Motor neuron (in vitro differentiated cells): ENCODE measurements at regions of chr20 and their contacts with region 1.

Region 1: GRCh38 chr20:24992487-24993205 is at the start of gene APMAP:
- ATAC-seq: peak; percentile 91 to 97 (median 94)
- H3K4me3 ChIP-seq: peak within 1 kb of the TSS; percentile 78 to 100 (median 97)
- H3K27ac ChIP-seq: peak within 1 kb of the TSS; percentile 77 to 84
- H3K4me1 ChIP-seq: peaks cover 20 to 33% of the 10 kb centered on the region in 2 donors
- total RNA-seq, gene APMAP: 47.5 to 163 (median 73.7) TPM

Region 2: GRCh38 chr20:25065625-25066338 is 73.1 kb after region 1 on chr20:
- in situ Hi-C with region 1: loop called in 3 of 9 experiments (anchors 5 to 10 kb)
- ATAC-seq: peak; percentile 59 to 82 (median 73)
- H3K4me3 ChIP-seq: no peak overlapping the region
- H3K27ac ChIP-seq: no peak overlapping the region
- H3K4me1 ChIP-seq: no peaks in the 10 kb centered on the region

Region 3: GRCh38 chr20:25160467-25160866 is 167.8 kb after region 1 on chr20:
- in situ Hi-C with region 1: loop called in 2 of 9 experiments (anchors 10 to 25 kb)
- ATAC-seq: peak in 2 of 8 experiments; percentile 6 to 27
- H3K4me3 ChIP-seq: no peak overlapping the region
- H3K27ac ChIP-seq: no peak overlapping the region
- H3K4me1 ChIP-seq: no peaks in the 10 kb centered on the region

Region 4: DNA sequence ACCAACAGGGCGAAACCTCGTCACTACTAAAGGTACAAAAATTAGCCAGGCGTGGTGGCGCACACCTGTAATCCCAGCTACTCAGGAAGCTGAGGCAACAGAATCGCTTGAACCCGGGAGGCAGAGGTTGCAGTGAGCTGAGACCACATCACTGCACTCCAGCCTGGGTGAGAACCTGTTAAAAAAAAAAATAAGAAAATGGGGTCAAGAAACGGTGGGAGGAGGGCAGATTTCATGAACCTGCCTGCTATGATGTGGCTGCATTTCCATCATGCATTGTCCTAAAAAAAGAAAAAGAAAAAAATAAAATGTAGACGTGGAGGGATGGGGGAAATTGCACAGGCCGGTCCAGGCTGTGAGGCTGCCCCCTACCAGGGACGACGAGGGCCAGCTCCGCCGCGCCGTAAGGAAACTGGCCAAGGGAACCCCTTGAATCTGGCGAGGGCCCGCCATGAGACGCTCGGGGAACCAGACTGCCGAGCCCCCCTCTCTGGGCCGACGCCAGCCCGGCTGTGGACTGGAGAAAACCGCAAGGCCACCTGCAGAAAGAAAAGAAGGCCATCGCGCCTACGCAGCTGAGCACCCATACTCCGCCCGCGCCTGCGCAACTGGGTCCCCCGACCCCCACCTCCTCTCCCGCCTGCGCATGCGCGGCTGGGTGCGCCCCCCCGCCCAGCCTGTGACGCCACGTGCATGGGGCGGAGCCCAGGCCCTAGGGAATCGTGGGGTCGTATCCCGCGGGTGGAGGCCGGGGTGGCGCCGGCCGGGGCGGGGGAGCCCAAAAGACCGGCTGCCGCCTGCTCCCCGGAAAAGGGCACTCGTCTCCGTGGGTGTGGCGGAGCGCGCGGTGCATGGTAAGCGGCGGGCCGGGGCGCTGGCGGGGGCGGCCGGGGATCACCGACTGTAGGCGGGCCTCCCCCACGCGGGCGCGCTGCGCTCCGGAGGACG is 202.6 kb after region 1 on chr20 and contains the start of gene ENTPD6:
- in situ Hi-C with region 1: loop called in 2 of 9 experiments (anchors 25 kb)
- ATAC-seq: peak; percentile 60 to 86 (median 84)
- H3K4me3 ChIP-seq: peak within 1 kb of the TSS; percentile 53 to 99 (median 93)
- H3K27ac ChIP-seq: peak within 1 kb of the TSS; percentile 86 to 92
- H3K4me1 ChIP-seq: peaks cover 6 to 16% of the 10 kb centered on the region in 2 donors
- total RNA-seq, gene ENTPD6: 37.7 to 58.2 (median 53.1) TPM

Region 5: DNA sequence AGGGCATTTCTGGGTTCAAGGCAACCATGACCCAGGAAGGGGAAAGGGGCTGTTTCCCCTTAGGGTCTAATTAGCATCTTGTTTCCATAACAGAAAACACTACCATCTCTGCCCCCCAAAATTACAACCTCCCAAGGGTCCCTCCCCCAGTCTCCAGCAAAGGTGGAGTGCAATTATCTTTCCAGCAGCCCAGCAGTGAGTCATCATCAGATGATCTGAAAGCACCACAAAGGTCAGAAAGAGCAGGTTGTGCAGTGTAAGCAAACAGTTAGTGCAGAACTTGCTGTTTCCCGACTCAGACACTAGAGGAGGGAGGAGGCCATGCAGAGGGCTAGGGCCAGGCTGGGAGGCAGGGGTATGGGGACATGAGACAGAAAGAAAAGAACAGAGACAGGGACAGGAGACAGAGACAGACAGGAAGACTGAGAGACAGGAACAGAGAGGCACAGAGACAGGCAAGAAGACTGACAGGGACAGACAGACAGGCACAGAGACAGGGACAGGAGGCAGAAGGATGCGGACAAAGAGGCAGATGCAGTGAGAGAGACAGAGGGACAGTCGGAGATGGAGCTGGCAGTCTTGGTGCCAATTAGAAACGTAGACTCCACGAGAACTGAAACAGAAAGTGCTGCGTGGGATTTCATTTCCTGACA is 317.7 kb after region 1 on chr20:
- in situ Hi-C with region 1: loop called in 1 of 9 experiments (anchors 25 kb)
- ATAC-seq: peak; percentile 69 to 94 (median 89)
- H3K4me3 ChIP-seq: no peak overlapping the region
- H3K27ac ChIP-seq: peak overlapping the region; percentile 44 to 77
- H3K4me1 ChIP-seq: peaks cover 2 to 23% of the 10 kb centered on the region in 2 donors

Region 6: DNA sequence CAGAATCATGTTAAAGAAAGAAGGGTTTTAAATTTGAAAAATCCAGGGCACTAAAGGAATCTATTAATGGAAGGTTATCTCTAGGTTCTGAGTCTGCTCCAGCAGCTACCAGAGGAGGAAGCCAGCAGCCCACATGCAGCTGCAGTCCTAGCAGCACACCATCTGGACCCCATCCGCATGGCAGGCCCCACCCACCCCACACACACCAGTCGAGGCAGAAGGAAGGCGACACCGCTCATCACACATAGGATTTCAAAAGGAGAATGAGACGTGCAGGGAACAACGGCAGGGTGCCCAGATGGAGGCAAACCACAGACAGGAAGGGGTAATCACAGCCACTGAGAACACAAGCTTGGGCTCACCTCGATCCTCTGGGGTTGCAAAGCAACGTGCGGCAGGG is 493.7 kb after region 1 on chr20:
- in situ Hi-C with region 1: no loop called
- ATAC-seq: peak in 5 of 8 experiments; percentile 10 to 77 (median 58)
- H3K4me3 ChIP-seq: no peak overlapping the region
- H3K27ac ChIP-seq: no peak overlapping the region
- H3K4me1 ChIP-seq: no peaks in the 10 kb centered on the region